Naive thymus-derived CD8-positive, alpha-beta T cell (primary cell): ENCODE measurements at regions of chr2 and their contacts with region 1.

Region 1: GRCh38 chr2:55268907-55269644 is at the start of gene MTIF2:
- DNase-seq: peak; percentile 71 to 90 (median 80)
- ATAC-seq: peak; percentile 89 to 91
- H3K4me3 Mint-ChIP-seq: peak within 1 kb of the TSS; percentile 89 to 99 (median 96)
- H3K27ac Mint-ChIP-seq: peak within 1 kb of the TSS; percentile 93 to 98 (median 97)
- H3K4me1 Mint-ChIP-seq: peaks cover 10 to 27% (median 25%) of the 10 kb centered on the region in 4 donors
- H3K27me3 Mint-ChIP-seq: no peaks in the 10 kb centered on the region
- polyA plus RNA-seq, gene MTIF2: 15.6 to 20.6 (median 16.8) TPM

Region 2: DNA sequence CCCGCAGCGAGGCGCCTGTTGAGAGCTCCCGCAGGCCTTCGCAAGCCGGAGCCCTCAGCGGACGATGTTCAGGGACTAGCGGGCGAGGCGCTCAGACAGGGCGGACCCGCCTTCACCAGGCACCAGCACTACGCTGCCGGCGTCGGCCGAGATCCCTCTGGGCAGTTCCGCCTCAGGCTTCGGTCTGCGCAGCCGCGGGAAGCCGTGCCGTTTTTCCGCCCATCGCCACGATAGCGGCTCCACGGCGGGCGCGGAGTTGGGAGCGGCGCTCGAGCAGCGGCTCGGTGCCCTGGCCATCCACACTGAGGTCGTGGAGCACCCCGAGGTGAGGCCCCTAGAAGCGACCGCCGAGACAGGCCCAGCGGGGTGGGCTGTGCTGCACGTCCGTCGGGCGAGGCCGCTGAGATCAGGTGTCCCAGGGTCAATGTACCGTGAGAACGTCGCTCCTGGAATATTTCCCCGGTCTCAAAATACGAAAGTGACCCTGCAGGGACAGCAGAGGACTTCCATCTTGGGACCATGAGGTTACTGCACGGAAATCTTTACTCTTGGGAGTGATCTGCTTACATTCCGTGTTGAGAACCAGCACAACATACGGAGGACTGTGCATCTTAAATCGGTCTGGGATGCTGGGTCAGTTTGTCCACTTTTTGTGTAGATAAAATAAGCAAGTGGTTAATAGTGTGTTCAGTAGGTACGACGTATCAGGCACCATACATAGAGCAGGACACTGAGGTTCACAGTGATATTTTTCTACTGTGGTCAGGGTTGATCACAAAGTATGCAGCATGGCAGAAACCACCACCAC is 13.2 kb after region 1 on chr2:
- POLR2A ChIA-PET with region 1: interaction called, 17 read pairs
- DNase-seq: peak; percentile 75 to 92 (median 85)
- ATAC-seq: peak; percentile 97 to 98
- H3K4me3 Mint-ChIP-seq: peak overlapping the region; percentile 87 to 96 (median 94)
- H3K27ac Mint-ChIP-seq: peak overlapping the region; percentile 97 to 99 (median 99)
- H3K4me1 Mint-ChIP-seq: peaks cover 9 to 36% (median 26%) of the 10 kb centered on the region in 4 donors
- H3K27me3 Mint-ChIP-seq: no peaks in the 10 kb centered on the region